Sigmoid colon (tissue), 7 donors: ENCODE measurements at regions of chr20 and their contacts with region 1.

Region 1: GRCh38 chr20:25584905-25585704 is at the start of gene NINL:
- DNase-seq: peak; percentile 78
- H3K4me3 ChIP-seq: peak within 1 kb of the TSS; percentile 79 to 84 (median 82)
- H3K27ac ChIP-seq: peak within 1 kb of the TSS; percentile 80 to 81 (median 80)
- H3K4me1 ChIP-seq: peaks cover 0 to 26% (median 16%) of the 10 kb centered on the region in 4 donors
- H3K27me3 ChIP-seq: no peaks in the 10 kb centered on the region
- CTCF ChIP-seq: no peak
- EP300 ChIP-seq: no peak
- POLR2A ChIP-seq: peak in 1 of 2 donors; percentile 21
- total RNA-seq, gene NINL: 9.6 to 19.9 (median 12.8) TPM

Region 2: GRCh38 chr20:25532119-25532751 is 52.9 kb before region 1 on chr20:
- intact Hi-C with region 1: loop called (anchors 5 kb)
- DNase-seq: no peak
- H3K4me3 ChIP-seq: peak overlapping the region in 2 of 4 donors; percentile 26 to 28
- H3K27ac ChIP-seq: peak overlapping the region in 3 of 4 donors; percentile 64 to 80 (median 77)
- H3K4me1 ChIP-seq: peaks cover 0 to 33% (median 25%) of the 10 kb centered on the region in 4 donors
- H3K27me3 ChIP-seq: no peaks in the 10 kb centered on the region
- CTCF ChIP-seq: peak in 1 of 4 experiments; percentile 30
- EP300 ChIP-seq: no peak
- POLR2A ChIP-seq: no peak

Region 3: GRCh38 chr20:25720294-25720693 is 135.2 kb after region 1 on chr20:
- intact Hi-C with region 1: no loop called
- DNase-seq: no peak
- H3K4me3 ChIP-seq: no peak overlapping the region
- H3K27ac ChIP-seq: no peak overlapping the region
- H3K4me1 ChIP-seq: no peaks in the 10 kb centered on the region
- H3K27me3 ChIP-seq: no peaks in the 10 kb centered on the region
- CTCF ChIP-seq: no peak
- EP300 ChIP-seq: no peak
- POLR2A ChIP-seq: no peak